Activated T-helper 1 cell treated with anti-CD3 and anti-CD28 coated beads, Interleukin-12 subunit alpha, Interleukin-12 subunit beta, Interleukin-2, Interleukin-4 antibody, amounts not matched to agents 30 ng/mL and 10 ng/mL and 1 ng/mL, durations not matched to agents 14 hours and 24 hours and 36 hours (primary cell): ENCODE measurements at regions of chr7 and their contacts with region 1.

Region 1: GRCh38 chr7:108569381-108570145 is at the starts of genes DNAJB9 and THAP5:
- DNase-seq: peak; percentile 100
- H3K4me3 Mint-ChIP-seq: peak within 1 kb of the TSS; percentile 95
- H3K27ac Mint-ChIP-seq: peak within 1 kb of the TSS; percentile 96
- H3K4me1 Mint-ChIP-seq: peaks cover 62% of the 10 kb centered on the region
- H3K27me3 Mint-ChIP-seq: no peaks in the 10 kb centered on the region
- total RNA-seq, gene DNAJB9: 16.9 and 20.0 TPM in 2 replicates
- total RNA-seq, gene THAP5: 37.2 and 39.9 TPM in 2 replicates

Region 2: GRCh38 chr7:106598663-106599342 is 1970.8 kb before region 1 on chr7:
- intact Hi-C with region 1: loop called (anchors 5 kb)
- DNase-seq: peak; percentile 51
- H3K4me3 Mint-ChIP-seq: no peak overlapping the region
- H3K27ac Mint-ChIP-seq: no peak overlapping the region
- H3K4me1 Mint-ChIP-seq: no peaks in the 10 kb centered on the region
- H3K27me3 Mint-ChIP-seq: peaks cover 5% of the 10 kb centered on the region

Region 3: GRCh38 chr7:107816011-107816566 is 753.5 kb before region 1 on chr7:
- intact Hi-C with region 1: loop called (anchors 10 kb)
- DNase-seq: no peak
- H3K4me3 Mint-ChIP-seq: peak overlapping the region; percentile 19
- H3K27ac Mint-ChIP-seq: peak overlapping the region; percentile 72
- H3K4me1 Mint-ChIP-seq: peaks cover 25% of the 10 kb centered on the region
- H3K27me3 Mint-ChIP-seq: no peaks in the 10 kb centered on the region

Region 4: GRCh38 chr7:108094933-108095710 is 474.4 kb before region 1 on chr7:
- intact Hi-C with region 1: no loop called
- DNase-seq: no peak
- H3K4me3 Mint-ChIP-seq: no peak overlapping the region
- H3K27ac Mint-ChIP-seq: no peak overlapping the region
- H3K4me1 Mint-ChIP-seq: no peaks in the 10 kb centered on the region
- H3K27me3 Mint-ChIP-seq: peaks cover 14% of the 10 kb centered on the region

Region 5: GRCh38 chr7:108181073-108181985 is 388.2 kb before region 1 on chr7:
- intact Hi-C with region 1: loop called (anchors 2 kb)
- DNase-seq: no peak
- H3K4me3 Mint-ChIP-seq: no peak overlapping the region
- H3K27ac Mint-ChIP-seq: no peak overlapping the region
- H3K4me1 Mint-ChIP-seq: no peaks in the 10 kb centered on the region
- H3K27me3 Mint-ChIP-seq: peaks cover 7% of the 10 kb centered on the region

Region 6: DNA sequence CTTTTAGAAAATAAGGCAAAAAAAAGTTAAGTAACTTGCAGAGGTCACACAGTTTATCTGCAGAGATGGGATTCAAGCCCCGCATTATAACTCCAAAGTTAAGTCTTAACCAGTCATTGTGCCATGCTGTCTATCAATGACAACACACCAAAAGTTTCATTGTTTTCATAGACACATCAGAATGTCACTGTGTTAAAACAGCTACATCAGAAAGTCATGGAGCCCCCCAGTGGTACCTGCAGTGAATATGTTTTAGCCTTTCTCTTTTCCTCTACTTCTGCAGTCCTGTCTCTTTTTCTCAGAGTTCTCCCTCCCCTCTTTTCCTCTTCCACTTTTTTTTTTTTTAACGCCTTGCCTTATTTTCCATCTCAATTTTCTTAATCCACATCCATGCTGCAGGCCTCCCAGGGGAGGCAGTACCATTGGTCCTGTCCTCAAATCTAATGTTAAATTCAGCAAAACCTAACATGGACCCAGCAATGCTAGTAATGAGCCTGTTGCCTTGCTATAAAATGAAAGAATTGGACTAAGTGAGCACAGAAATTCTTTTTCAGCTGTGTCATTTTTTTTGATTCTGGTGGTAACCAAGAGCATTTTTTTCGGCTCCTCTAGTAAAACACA is 109.5 kb before region 1 on chr7:
- intact Hi-C with region 1: loop called (anchors 5 kb)
- DNase-seq: no peak
- H3K4me3 Mint-ChIP-seq: no peak overlapping the region
- H3K27ac Mint-ChIP-seq: no peak overlapping the region
- H3K4me1 Mint-ChIP-seq: peaks cover 6% of the 10 kb centered on the region
- H3K27me3 Mint-ChIP-seq: peaks cover 37% of the 10 kb centered on the region

Region 7: GRCh38 chr7:108525985-108526767 is 43.4 kb before region 1 on chr7 and contains the start of gene PNPLA8:
- intact Hi-C with region 1: loop called (anchors 1 kb)
- DNase-seq: peak; percentile 100
- H3K4me3 Mint-ChIP-seq: peak within 1 kb of the TSS; percentile 92
- H3K27ac Mint-ChIP-seq: peak within 1 kb of the TSS; percentile 97
- H3K4me1 Mint-ChIP-seq: peaks cover 34% of the 10 kb centered on the region
- H3K27me3 Mint-ChIP-seq: peaks cover 3% of the 10 kb centered on the region
- total RNA-seq, gene PNPLA8: 16.8 and 18.3 TPM in 2 replicates

Region 8: DNA sequence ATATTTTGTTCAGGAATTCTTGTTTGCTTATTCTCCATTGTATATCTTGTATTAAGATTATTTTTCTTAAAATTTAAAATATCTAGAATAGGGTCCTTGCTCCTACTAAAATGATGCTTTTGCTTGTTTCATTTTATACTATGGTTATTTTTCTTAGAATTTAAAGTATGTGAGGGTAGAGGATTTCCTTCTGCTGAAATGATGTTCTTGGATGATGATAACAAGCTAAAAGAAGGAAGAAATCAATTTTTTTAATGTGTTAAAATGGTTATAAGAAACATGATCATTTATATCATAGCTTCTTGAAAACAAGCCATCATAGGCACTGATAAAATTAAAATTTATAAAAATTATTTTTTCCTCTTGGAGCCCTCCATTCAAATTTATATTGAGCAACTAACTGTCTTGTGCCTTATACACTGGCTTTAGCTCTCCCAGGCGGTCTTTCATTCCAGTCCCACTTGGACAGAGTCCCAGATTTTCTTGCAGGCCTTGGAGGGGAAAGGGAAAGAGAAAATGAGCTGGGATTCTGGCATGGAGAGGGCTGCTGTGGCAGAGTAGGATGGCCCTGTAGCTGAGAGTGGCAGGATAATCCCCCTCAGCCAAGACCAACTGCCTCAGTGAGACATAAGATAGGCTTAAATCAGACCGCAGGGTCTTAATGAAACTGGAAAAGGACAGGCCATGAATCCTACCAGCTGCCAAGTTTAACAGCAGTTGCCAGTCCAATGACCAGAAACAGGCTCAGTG is 60.3 kb after region 1 on chr7:
- intact Hi-C with region 1: no loop called
- DNase-seq: no peak
- H3K4me3 Mint-ChIP-seq: no peak overlapping the region
- H3K27ac Mint-ChIP-seq: no peak overlapping the region
- H3K4me1 Mint-ChIP-seq: no peaks in the 10 kb centered on the region
- H3K27me3 Mint-ChIP-seq: peaks cover 3% of the 10 kb centered on the region

Region 9: GRCh38 chr7:108650467-108650866 is 80.9 kb after region 1 on chr7:
- intact Hi-C with region 1: no loop called
- DNase-seq: no peak
- H3K4me3 Mint-ChIP-seq: no peak overlapping the region
- H3K27ac Mint-ChIP-seq: no peak overlapping the region
- H3K4me1 Mint-ChIP-seq: no peaks in the 10 kb centered on the region
- H3K27me3 Mint-ChIP-seq: no peaks in the 10 kb centered on the region